Caco-2 (cell line): ENCODE measurements at regions of chr11 and their contacts with region 1.

Region 1: GRCh38 chr11:90476442-90477007 is 253.7 kb upstream of the CHORDC1 start:
- DNase-seq: peak in 1 of 2 experiments; percentile 53
- H3K4me3 ChIP-seq: no peak overlapping the region
- H3K4me3 Mint-ChIP-seq: no peak overlapping the region
- H3K27ac Mint-ChIP-seq: no peak overlapping the region
- H3K4me1 ChIP-seq: 0 out of 2 replicates have a peak, but pooled peaks cover 3% of the 10 kb centered on the region
- H3K4me1 Mint-ChIP-seq: peaks cover 11% of the 10 kb centered on the region
- H3K27me3 ChIP-seq: no peaks in the 10 kb centered on the region
- H3K27me3 Mint-ChIP-seq: no peaks in the 10 kb centered on the region
- CTCF ChIP-seq: peak; percentile 77 to 86

Region 2: DNA sequence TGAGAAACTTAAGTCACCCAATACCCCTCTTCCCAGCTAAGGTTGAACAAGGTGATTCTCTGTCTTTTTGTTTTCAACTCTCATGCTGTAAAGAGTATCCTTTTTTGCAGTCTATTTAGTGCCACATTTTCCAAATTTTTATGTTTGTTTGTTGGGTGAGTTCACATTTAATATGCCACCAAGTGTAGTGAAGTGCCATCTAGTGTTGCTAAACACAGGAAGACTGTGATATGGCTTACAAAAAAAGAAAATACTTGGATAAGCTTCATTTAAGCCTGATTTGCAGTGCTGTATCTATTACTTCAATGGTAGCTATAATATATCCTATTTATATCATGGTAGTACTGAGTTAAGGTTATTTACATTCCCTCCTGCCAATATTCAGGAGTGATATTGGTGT is 65.6 kb after region 1 on chr11:
- CTCF ChIA-PET with region 1: no interaction called
- POLR2A ChIA-PET with region 1: no interaction called
- intact Hi-C with region 1: loop called (anchors 1 kb)
- DNase-seq: no peak
- H3K4me3 ChIP-seq: no peak overlapping the region
- H3K4me3 Mint-ChIP-seq: no peak overlapping the region
- H3K27ac Mint-ChIP-seq: no peak overlapping the region
- H3K4me1 ChIP-seq: no peaks in the 10 kb centered on the region
- H3K4me1 Mint-ChIP-seq: no peaks in the 10 kb centered on the region
- H3K27me3 ChIP-seq: no peaks in the 10 kb centered on the region
- H3K27me3 Mint-ChIP-seq: peaks cover 8% of the 10 kb centered on the region
- CTCF ChIP-seq: peak; percentile 8 to 19

Region 3: DNA sequence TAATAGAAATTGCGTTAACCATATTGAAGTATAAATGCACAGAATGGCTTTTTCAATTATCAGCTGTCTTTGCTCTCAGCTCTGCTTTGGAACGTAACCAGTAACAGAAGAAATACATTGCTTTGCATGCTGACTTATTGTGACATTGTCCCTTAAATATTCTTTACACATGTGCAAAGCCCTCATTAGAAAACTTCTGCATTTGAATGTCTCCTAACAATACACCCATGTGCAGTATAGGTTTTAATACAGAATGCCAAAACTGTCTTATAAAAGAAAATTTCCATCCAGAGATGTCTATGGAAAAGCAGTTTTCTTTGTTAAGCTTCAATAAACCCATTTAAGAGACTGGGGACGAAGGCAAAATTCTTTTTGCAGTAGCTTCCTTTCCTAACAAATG is 306.6 kb after region 1 on chr11:
- CTCF ChIA-PET with region 1: no interaction called
- POLR2A ChIA-PET with region 1: no interaction called
- intact Hi-C with region 1: no loop called
- DNase-seq: no peak
- H3K4me3 ChIP-seq: no peak overlapping the region
- H3K4me3 Mint-ChIP-seq: no peak overlapping the region
- H3K27ac Mint-ChIP-seq: no peak overlapping the region
- H3K4me1 ChIP-seq: no peaks in the 10 kb centered on the region
- H3K4me1 Mint-ChIP-seq: no peaks in the 10 kb centered on the region
- H3K27me3 ChIP-seq: no peaks in the 10 kb centered on the region
- H3K27me3 Mint-ChIP-seq: peaks cover 6% of the 10 kb centered on the region
- CTCF ChIP-seq: no peak

Region 4: DNA sequence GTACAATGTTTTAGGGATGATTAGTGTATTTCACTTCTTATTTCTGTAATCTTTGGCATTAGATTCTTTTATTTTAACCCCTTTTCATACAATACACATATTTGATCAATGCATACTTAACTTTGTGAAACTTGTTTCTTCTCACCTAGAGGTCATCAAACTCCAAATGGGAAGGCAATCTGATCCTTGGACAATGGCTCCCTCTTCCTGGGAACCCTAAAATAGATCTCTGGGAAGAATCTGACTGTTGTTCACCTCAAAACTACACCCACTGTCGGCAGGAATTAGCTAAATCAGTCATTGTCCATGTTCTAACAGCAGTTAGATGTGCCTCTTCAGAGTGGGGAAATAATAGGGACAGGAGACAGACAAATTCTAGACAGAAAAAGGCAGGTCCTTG is 453.7 kb after region 1 on chr11:
- CTCF ChIA-PET with region 1: no interaction called
- POLR2A ChIA-PET with region 1: no interaction called
- intact Hi-C with region 1: loop called (anchors 5 kb)
- DNase-seq: no peak
- H3K4me3 ChIP-seq: no peak overlapping the region
- H3K4me3 Mint-ChIP-seq: no peak overlapping the region
- H3K27ac Mint-ChIP-seq: no peak overlapping the region
- H3K4me1 ChIP-seq: no peaks in the 10 kb centered on the region
- H3K4me1 Mint-ChIP-seq: no peaks in the 10 kb centered on the region
- H3K27me3 ChIP-seq: no peaks in the 10 kb centered on the region
- H3K27me3 Mint-ChIP-seq: peaks cover 12% of the 10 kb centered on the region
- CTCF ChIP-seq: no peak

Region 5: DNA sequence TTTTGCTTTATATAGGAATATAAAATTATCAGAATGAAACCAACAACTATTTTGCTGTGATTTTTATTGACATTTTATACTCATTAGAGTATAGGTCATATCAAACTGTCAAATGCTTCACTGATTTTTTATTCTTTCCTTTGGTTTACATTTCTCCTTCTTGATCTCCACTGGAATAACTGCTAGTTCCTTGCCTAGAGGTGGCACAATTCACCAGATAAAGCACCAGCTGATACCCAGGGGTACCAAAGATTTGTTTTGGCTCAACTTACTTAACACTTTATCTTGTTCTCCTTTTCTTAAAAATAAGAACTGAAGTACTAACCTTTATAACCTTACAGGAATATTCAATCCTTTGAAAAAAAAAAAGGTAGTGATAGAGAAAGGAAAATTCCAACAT is 471.4 kb after region 1 on chr11:
- CTCF ChIA-PET with region 1: no interaction called
- POLR2A ChIA-PET with region 1: no interaction called
- intact Hi-C with region 1: loop called (anchors 1 kb)
- DNase-seq: no peak
- H3K4me3 ChIP-seq: no peak overlapping the region
- H3K4me3 Mint-ChIP-seq: no peak overlapping the region
- H3K27ac Mint-ChIP-seq: no peak overlapping the region
- H3K4me1 ChIP-seq: no peaks in the 10 kb centered on the region
- H3K4me1 Mint-ChIP-seq: peaks cover 7% of the 10 kb centered on the region
- H3K27me3 ChIP-seq: no peaks in the 10 kb centered on the region
- H3K27me3 Mint-ChIP-seq: peaks cover 2% of the 10 kb centered on the region
- CTCF ChIP-seq: no peak